ENCODE measurements at regions of chr6 and their contacts with region 1.

Region 1: GRCh38 chr6:63997217-63997616 is 361.6 kb downstream of the PHF3 start:
- DNase-seq: no peak

Region 2: GRCh38 chr6:63476302-63476701 is 520.9 kb before region 1 on chr6:
- intact Hi-C with region 1: no loop called
- DNase-seq: no peak

Region 3: DNA sequence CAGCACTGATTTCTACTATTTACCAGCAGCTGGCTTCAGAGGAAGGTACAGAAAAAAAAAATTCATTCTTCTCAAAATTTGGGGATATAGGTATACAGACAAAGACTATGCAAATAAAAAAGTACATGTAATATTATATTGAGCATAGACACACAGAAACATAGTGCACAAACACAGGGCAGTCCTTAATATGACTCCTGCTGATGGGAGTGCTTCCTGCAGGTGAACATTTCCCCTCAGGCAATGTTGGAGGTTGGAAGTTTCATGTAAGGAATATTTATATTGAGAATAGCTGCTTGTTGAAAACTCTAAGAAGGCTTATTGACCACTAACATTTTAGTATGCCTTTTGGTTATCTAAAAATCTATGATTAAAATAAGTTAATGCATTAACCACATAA is 463.7 kb after region 1 on chr6:
- intact Hi-C with region 1: loop called in 1 of 2 experiments (anchors 5 kb)
- DNase-seq: no peak